Activated naive CD4-positive, alpha-beta T cell treated with anti-CD3 and anti-CD28 coated beads for 36 hours (primary cell): ENCODE measurements at regions of chr2 and their contacts with region 1.

Region 1: GRCh38 chr2:238670111-238670585 is 177.7 kb upstream of the TWIST2 start:
- DNase-seq: peak; percentile 57
- H3K4me3 Mint-ChIP-seq: no peak overlapping the region
- H3K27ac Mint-ChIP-seq: peak overlapping the region; percentile 20
- H3K4me1 Mint-ChIP-seq: peaks cover 3% of the 10 kb centered on the region
- H3K27me3 Mint-ChIP-seq: peaks cover 36% of the 10 kb centered on the region

Region 2: DNA sequence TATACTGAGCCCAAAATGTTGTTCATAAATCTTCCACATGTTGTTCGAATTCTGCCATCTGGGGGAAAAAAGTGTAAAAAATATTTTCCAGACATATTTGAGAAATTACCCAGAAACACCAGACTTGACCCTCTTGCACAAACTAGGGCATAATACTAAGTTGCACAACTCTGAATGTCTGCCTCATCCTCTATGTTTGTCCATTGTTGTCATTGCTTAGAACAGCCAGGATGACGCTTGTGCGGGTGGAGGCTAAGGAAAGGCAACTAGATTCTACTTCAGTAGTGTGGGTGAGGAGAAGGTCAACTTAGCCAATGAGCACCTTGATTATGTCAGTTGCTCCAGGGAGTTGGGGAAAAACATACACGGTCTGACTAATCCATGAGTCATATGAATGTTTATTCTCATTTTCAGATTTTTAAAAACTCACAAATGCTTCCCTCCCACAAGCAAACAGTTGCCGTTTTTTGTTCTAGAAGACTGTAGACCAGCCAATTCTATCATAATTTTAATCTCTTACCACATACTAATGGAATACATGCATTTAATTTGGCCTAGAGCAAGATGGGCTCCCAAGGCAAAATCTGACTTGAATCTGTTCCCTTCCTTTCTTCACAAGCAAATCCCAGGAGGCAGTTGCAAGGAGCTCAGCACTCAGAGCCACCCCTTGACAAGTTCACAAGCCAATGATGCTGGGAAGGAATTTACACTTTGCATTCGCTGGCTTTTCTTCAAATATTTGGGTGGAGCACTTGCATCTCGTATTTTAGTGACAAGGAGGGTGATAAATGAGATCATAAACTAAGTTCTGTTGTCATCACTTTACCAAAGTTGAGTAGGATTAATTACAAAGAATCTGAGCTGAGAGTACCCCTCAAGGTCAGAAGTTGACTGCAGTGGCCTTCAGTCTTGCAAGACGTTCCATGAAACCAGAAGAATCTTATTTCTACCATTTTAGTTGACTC is 14.5 kb after region 1 on chr2:
- CTCF ChIA-PET with region 1: no interaction called
- intact Hi-C with region 1: loop called (anchors 1 kb)
- DNase-seq: peak; percentile 37
- H3K4me3 Mint-ChIP-seq: no peak overlapping the region
- H3K27ac Mint-ChIP-seq: no peak overlapping the region
- H3K4me1 Mint-ChIP-seq: peaks cover 13% of the 10 kb centered on the region
- H3K27me3 Mint-ChIP-seq: peaks cover 32% of the 10 kb centered on the region